Naive thymus-derived CD4-positive, alpha-beta T cell (primary cell): ENCODE measurements at regions of chr18 and their contacts with region 1.

Region 1: DNA sequence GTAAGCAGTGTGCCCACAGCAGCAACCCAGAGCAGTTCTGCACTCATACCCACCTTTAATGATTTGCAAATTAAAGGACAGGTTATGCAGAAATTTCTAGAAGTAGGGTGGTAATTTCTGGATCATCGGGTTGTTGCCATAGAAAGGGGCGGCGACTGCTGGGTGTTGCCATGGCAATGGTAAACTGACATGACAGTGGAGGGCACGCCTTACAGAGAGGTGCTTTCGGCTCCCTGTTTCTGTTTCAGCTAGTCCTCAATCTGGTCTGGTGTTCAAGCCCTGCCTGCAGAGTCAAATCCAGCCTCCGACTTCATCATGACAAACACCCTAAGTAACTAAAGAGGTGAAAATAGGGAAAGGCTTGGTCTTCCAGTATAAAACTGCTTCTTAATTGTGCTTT is 667.7 kb downstream of the SOCS6 start:
- DNase-seq: peak in 1 of 9 donors; percentile 3
- ATAC-seq: no peak
- H3K4me3 ChIP-seq: no peak overlapping the region
- H3K4me3 Mint-ChIP-seq: no peak overlapping the region
- H3K27ac ChIP-seq: no peak overlapping the region
- H3K27ac Mint-ChIP-seq: no peak overlapping the region
- H3K4me1 ChIP-seq: no peaks in the 10 kb centered on the region
- H3K4me1 Mint-ChIP-seq: no peaks in the 10 kb centered on the region
- H3K27me3 ChIP-seq: no peaks in the 10 kb centered on the region
- H3K27me3 Mint-ChIP-seq: no peaks in the 10 kb centered on the region

Region 2: GRCh38 chr18:70892381-70892780 is 64.2 kb before region 1 on chr18:
- CTCF ChIA-PET with region 1: no interaction called
- POLR2A ChIA-PET with region 1: no interaction called
- intact Hi-C with region 1: loop called in 1 of 2 experiments (anchors 10 kb)
- DNase-seq: no peak
- ATAC-seq: no peak
- H3K4me3 ChIP-seq: no peak overlapping the region
- H3K4me3 Mint-ChIP-seq: no peak overlapping the region
- H3K27ac ChIP-seq: no peak overlapping the region
- H3K27ac Mint-ChIP-seq: no peak overlapping the region
- H3K4me1 ChIP-seq: no peaks in the 10 kb centered on the region
- H3K4me1 Mint-ChIP-seq: no peaks in the 10 kb centered on the region
- H3K27me3 ChIP-seq: no peaks in the 10 kb centered on the region
- H3K27me3 Mint-ChIP-seq: no peaks in the 10 kb centered on the region

Region 3: GRCh38 chr18:71020342-71021029 is 63.9 kb after region 1 on chr18:
- CTCF ChIA-PET with region 1: no interaction called
- POLR2A ChIA-PET with region 1: no interaction called
- intact Hi-C with region 1: no loop called
- DNase-seq: no peak
- ATAC-seq: no peak
- H3K4me3 ChIP-seq: no peak overlapping the region
- H3K4me3 Mint-ChIP-seq: no peak overlapping the region
- H3K27ac ChIP-seq: no peak overlapping the region
- H3K27ac Mint-ChIP-seq: no peak overlapping the region
- H3K4me1 ChIP-seq: no peaks in the 10 kb centered on the region
- H3K4me1 Mint-ChIP-seq: peaks cover 0 to 6% (median 0%) of the 10 kb centered on the region in 7 donors
- H3K27me3 ChIP-seq: no peaks in the 10 kb centered on the region
- H3K27me3 Mint-ChIP-seq: no peaks in the 10 kb centered on the region